OCI-LY7 (cell line): ENCODE measurements at regions of chr19 and their contacts with region 1.

Region 1: DNA sequence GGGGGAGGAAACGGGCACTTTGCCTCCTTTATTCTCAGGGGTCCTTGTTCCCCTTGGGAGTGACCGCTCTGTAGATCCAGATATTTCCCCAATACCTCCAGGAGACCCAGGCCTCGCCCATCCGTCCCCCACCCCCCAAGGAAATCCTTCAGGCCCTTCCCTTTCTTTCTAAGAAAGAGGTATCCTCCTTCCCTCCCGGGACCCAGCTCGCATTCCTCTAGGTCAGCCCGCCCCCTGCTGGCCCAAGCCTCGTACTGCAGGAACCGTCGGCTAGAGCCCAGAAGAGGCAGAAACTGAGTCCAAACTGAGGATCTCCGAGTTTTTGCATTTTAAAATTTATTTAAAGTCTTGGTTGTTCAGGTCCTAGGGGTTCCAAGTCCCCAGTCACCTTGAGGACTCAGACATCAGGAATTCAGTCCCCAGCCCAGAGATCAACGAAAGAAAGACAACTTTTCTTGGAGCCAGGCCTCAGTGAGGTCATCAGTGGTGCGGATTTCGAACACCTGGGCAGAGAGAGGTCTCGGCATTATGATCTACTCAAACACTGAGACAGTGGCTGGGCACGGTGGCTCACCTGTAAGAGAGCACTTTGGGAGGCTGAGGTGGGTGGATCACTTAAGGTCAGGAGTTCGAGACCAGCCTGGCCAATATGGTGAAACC is 7.5 kb upstream of the LRFN1 start:
- DNase-seq: peak; percentile 69
- H3K4me3 ChIP-seq: no peak overlapping the region
- H3K27ac ChIP-seq: no peak overlapping the region
- H3K4me1 ChIP-seq: no peaks in the 10 kb centered on the region
- CTCF ChIP-seq: peak; percentile 98

Region 2: DNA sequence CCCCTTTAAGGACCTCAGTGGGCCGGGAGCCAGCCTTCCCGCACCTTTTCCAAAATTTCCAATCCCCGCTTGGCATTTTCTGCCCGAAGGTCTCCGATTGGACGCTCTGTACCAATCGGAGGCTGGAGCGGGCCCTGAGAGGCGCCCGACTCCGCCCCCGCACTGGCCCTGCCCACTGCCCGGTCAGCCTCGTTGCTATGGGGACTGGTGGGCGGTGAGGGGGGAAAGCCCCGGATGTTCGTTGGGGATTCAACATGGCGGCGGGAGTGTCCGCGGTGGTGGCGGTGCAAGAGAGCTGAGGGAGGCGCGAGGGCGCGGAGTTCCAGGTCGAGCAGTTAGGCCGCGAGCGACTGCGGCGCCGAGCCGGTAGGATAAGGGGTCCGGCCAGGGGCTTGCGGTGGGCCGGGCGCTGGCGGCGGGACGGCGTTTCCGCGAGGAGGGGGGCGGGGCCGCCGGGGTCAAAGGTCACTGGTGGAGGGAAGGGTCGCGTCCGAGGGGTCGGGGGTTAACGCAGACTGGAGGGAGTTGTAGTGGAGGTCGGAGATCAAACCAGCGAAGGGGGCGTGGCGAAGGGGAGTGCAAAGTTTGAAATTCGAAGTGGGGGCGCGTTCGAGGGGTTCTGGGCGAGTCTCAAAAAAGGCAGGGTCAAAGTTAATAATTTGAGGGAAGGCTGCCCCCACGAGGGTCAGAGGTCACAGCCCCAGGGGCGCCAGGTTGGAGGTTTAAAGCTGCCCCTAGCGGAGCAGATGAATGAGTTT is 202.4 kb before region 1 on chr19 and contains the start of gene PAK4:
- CTCF ChIA-PET with region 1: no interaction called
- POLR2A ChIA-PET with region 1: no interaction called
- intact Hi-C with region 1: loop called (anchors 1 kb)
- DNase-seq: peak; percentile 98
- H3K4me3 ChIP-seq: peak within 1 kb of the TSS; percentile 77
- H3K27ac ChIP-seq: peak within 1 kb of the TSS; percentile 55
- H3K4me1 ChIP-seq: peaks cover 20% of the 10 kb centered on the region
- CTCF ChIP-seq: no peak
- total RNA-seq, gene PAK4: 7.8 and 8.1 TPM in 2 replicates

Region 3: DNA sequence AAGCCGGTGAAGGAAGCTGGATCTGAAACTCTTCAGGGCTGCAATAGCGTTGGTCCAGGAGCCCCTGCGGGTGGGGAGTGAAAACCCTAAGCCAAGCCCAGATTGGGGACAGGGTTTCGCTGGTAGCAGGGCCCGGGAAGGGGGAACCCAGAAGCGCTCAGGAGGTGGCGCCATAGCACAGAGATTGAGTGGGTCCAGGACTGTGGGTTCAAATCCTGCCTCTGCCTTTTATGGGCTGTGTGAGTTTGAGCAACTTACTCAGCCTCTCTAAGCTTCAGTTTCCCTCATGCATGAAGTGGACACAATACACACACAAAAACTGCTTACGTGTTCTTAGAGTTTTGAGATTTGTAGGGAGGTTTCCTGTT is 115.8 kb before region 1 on chr19:
- CTCF ChIA-PET with region 1: no interaction called
- POLR2A ChIA-PET with region 1: interaction called, 5 read pairs
- intact Hi-C with region 1: loop called (anchors 1 kb)
- DNase-seq: peak; percentile 62
- H3K4me3 ChIP-seq: no peak overlapping the region
- H3K27ac ChIP-seq: no peak overlapping the region
- H3K4me1 ChIP-seq: no peaks in the 10 kb centered on the region
- CTCF ChIP-seq: peak; percentile 78